MCF 10A (cell line): ENCODE measurements at regions of chr3 and their contacts with region 1.

Region 1: DNA sequence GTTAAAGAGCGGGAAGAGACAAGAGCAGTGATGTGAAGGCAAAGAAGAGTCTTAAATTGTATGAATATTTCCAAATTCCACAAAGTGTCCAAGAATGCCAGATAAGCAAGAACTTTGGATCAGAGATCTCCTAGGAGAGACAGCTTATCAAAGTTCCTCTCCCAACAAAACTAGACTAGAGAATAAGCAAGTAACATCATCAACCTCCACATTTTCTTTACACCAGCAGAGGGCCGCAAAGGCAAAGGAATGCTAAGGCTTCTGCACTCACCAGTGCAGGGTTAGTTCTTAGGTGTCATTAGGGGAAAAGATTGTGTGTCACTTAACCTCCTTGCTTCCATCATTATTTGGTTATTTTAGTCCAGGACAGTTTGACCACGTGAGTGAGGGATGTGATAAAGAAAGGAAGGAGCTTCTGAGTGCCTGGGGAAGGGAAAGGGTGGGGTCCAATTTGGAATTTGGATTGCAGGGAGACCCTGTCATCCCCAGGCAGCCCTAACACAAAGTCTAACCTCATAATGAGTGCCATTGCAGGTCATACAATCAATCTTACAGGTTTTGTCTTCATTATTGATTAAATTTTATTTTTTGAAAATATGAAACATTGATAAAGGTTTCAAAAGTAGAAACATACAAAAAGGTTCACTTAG is 7.5 kb upstream of the CMTM6 start:
- DNase-seq: peak; percentile 80
- H3K4me3 Mint-ChIP-seq: no peak overlapping the region
- H3K27ac Mint-ChIP-seq: no peak overlapping the region
- H3K4me1 Mint-ChIP-seq: peaks cover 7% of the 10 kb centered on the region
- H3K27me3 Mint-ChIP-seq: no peaks in the 10 kb centered on the region
- CTCF ChIP-seq: peak; percentile 78

Region 2: DNA sequence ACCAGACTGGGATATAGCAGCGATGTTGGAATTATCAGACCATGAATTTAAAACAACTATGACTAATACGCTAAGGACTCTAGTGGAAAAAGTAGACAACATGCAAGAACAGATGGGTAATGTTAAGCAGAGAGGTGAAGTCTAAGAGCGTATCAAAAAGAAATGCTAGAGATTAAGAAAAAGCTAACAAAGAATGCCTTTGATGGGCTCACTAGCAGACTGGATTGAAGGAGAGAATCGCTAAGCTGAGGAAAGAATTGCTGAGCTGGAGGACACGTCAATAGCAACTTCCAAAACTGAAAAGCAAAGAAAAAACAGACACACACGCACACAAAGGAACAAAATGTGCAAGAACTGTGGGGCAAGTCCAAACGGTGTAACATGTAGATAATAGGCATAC is 12.5 kb after region 1 on chr3:
- CTCF ChIA-PET with region 1: interaction called, 19 read pairs
- POLR2A ChIA-PET with region 1: interaction called, 3 read pairs
- intact Hi-C with region 1: no loop called
- DNase-seq: no peak
- H3K4me3 Mint-ChIP-seq: no peak overlapping the region
- H3K27ac Mint-ChIP-seq: no peak overlapping the region
- H3K4me1 Mint-ChIP-seq: no peaks in the 10 kb centered on the region
- H3K27me3 Mint-ChIP-seq: no peaks in the 10 kb centered on the region
- CTCF ChIP-seq: no peak

Region 3: DNA sequence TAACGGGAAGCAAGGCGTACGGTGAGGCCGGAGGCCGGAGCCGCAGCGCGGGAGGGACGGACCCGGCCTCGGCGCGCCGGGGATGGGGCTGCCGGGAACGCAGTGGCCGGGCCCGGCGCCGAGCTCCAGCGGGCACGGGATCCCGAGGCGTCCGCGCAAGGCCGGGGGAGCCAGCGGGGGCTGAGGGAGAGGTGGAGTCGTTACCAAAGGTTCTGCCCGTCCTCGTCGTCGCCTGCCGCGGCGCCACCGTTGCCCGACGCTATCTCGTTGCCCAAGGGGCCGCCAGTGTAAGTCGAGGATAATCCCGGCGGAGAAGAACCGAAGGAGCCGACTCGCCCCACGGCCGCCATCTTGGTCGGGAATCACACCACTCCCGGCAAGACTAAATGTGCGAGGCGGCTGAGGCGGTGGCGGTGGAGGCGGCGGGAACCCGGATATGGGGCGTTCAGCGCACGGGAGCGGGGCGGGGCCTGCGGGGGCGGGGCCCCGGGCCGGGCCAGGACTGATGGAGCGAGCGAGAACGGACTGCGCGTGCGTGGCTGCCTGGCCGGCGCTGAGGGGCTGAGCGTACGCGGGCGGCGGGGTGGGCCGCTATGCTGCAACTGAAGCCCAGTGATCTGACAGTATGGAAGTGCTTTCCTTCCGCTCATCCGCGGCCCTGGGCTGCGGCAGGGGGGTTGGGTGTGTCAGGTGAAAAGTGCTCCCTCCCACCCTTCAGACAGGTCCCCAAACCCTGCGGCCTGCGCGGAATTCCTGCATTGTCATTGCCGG is 60.4 kb after region 1 on chr3 and contains the start of gene DYNC1LI1:
- CTCF ChIA-PET with region 1: interaction called, 11 read pairs
- POLR2A ChIA-PET with region 1: interaction called, 3 read pairs
- intact Hi-C with region 1: no loop called
- DNase-seq: peak; percentile 94
- H3K4me3 Mint-ChIP-seq: peak within 1 kb of the TSS; percentile 90
- H3K27ac Mint-ChIP-seq: peak within 1 kb of the TSS; percentile 88
- H3K4me1 Mint-ChIP-seq: no peaks in the 10 kb centered on the region
- H3K27me3 Mint-ChIP-seq: no peaks in the 10 kb centered on the region
- CTCF ChIP-seq: no peak
- total RNA-seq, gene DYNC1LI1: 39.1 and 47.6 TPM in 2 replicates

Region 4: DNA sequence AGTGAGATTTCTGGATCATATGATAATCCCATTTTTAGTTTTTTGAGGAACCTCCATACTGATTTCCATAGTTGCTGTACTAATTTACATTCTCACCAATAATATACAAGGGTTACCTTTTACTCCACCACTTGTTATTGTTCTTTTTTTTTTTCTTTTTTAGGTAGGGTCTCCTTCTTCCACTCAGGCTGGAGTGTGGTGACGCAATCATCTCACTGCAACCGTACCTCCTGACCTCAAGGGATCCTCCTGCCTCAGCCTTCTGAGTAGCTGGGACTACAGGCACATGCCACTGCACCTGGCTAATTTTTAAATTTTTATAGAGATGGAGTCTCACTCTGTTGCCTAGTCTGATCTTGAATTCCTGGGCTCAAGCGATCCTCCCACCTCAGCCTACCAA is 150.4 kb after region 1 on chr3:
- CTCF ChIA-PET with region 1: interaction called, 10 read pairs
- POLR2A ChIA-PET with region 1: no interaction called
- intact Hi-C with region 1: loop called (anchors 1 kb)
- DNase-seq: no peak
- H3K4me3 Mint-ChIP-seq: no peak overlapping the region
- H3K27ac Mint-ChIP-seq: no peak overlapping the region
- H3K4me1 Mint-ChIP-seq: no peaks in the 10 kb centered on the region
- H3K27me3 Mint-ChIP-seq: peaks cover 34% of the 10 kb centered on the region
- CTCF ChIP-seq: no peak

Region 5: GRCh38 chr3:32667122-32667521 is 156.9 kb after region 1 on chr3:
- CTCF ChIA-PET with region 1: interaction called, 8 read pairs
- POLR2A ChIA-PET with region 1: no interaction called
- intact Hi-C with region 1: loop called (anchors 1 kb)
- DNase-seq: no peak
- H3K4me3 Mint-ChIP-seq: no peak overlapping the region
- H3K27ac Mint-ChIP-seq: no peak overlapping the region
- H3K4me1 Mint-ChIP-seq: no peaks in the 10 kb centered on the region
- H3K27me3 Mint-ChIP-seq: peaks cover 30% of the 10 kb centered on the region
- CTCF ChIP-seq: no peak

Region 6: GRCh38 chr3:32934150-32934742 is 424.0 kb after region 1 on chr3:
- CTCF ChIA-PET with region 1: no interaction called
- POLR2A ChIA-PET with region 1: no interaction called
- intact Hi-C with region 1: loop called (anchors 2 kb)
- DNase-seq: peak; percentile 42
- H3K4me3 Mint-ChIP-seq: no peak overlapping the region
- H3K27ac Mint-ChIP-seq: no peak overlapping the region
- H3K4me1 Mint-ChIP-seq: peaks cover 14% of the 10 kb centered on the region
- H3K27me3 Mint-ChIP-seq: no peaks in the 10 kb centered on the region
- CTCF ChIP-seq: peak; percentile 67